ENCODE measurements at regions of chr20 and their contacts with region 1.

Region 1: GRCh38 chr20:52145587-52145986 is 46.0 kb downstream of the ZFP64 start:
- DNase-seq: no peak
- H3K4me3 ChIP-seq: no peak overlapping the region
- H3K27ac ChIP-seq: no peak overlapping the region
- H3K4me1 ChIP-seq: no peaks in the 10 kb centered on the region
- H3K27me3 ChIP-seq: no peaks in the 10 kb centered on the region
- CTCF ChIP-seq: no peak
- EP300 ChIP-seq: no peak
- POLR2A ChIP-seq: no peak

Region 2: GRCh38 chr20:52191132-52191915 is 45.7 kb after region 1 on chr20 and contains the start of gene ZFP64:
- intact Hi-C with region 1: loop called (anchors 5 kb)
- DNase-seq: peak; percentile 81
- H3K4me3 ChIP-seq: peak within 1 kb of the TSS; percentile 75 to 95 (median 88)
- H3K27ac ChIP-seq: peak within 1 kb of the TSS; percentile 89 to 94 (median 92)
- H3K4me1 ChIP-seq: peaks cover 0 to 20% (median 16%) of the 10 kb centered on the region in 4 donors
- H3K27me3 ChIP-seq: no peaks in the 10 kb centered on the region
- CTCF ChIP-seq: peak in 3 of 4 experiments; percentile 7 to 38 (median 21)
- EP300 ChIP-seq: no peak
- POLR2A ChIP-seq: peak in 1 of 2 donors; percentile 16
- total RNA-seq, gene ZFP64: 7.9 to 20.5 (median 10.9) TPM

Region 3: DNA sequence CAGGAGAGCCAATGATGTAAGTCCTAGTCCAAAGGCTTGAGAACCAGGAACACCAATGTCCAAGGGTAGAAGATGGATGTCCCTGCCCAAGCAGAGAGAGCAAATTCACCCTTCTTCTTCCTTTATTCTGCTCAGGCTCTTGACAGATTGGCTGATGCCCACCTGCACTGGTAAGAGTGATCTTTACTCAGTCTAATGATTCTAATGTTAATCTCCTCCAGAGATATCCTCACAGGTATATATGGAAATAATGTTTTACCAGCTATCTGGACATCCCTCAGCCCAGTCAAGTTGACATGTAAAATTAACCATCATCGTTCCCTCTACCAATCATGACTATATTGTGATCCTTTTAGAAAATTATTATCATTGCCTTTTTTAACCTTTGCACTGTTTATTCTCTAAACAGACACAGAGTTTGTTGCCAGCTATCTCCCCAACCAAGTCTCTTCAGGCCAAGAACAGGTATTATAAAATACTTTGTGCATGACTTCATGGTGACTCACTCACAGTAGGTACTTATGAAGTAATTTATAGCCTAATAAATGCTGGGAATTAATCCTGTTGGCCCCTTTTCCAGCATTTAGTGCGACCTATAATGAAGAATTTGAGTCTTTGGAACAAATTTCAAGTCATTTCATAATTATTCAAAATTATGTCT is 800.4 kb after region 1 on chr20:
- intact Hi-C with region 1: no loop called
- DNase-seq: no peak
- H3K4me3 ChIP-seq: no peak overlapping the region
- H3K27ac ChIP-seq: no peak overlapping the region
- H3K4me1 ChIP-seq: no peaks in the 10 kb centered on the region
- H3K27me3 ChIP-seq: no peaks in the 10 kb centered on the region
- CTCF ChIP-seq: no peak
- EP300 ChIP-seq: no peak
- POLR2A ChIP-seq: no peak

Measured in sigmoid colon (tissue), 7 donors.